PC-3 (cell line): ENCODE measurements at regions of chr2 and their contacts with region 1.

Region 1: GRCh38 chr2:178219247-178219646 is 24.9 kb downstream of the OSBPL6 start:
- DNase-seq: no peak
- ATAC-seq: no peak
- H3K4me3 ChIP-seq: no peak overlapping the region
- H3K27ac ChIP-seq: no peak overlapping the region
- H3K4me1 ChIP-seq: no peaks in the 10 kb centered on the region
- H3K27me3 ChIP-seq: no peaks in the 10 kb centered on the region
- CTCF ChIP-seq: no peak

Region 2: DNA sequence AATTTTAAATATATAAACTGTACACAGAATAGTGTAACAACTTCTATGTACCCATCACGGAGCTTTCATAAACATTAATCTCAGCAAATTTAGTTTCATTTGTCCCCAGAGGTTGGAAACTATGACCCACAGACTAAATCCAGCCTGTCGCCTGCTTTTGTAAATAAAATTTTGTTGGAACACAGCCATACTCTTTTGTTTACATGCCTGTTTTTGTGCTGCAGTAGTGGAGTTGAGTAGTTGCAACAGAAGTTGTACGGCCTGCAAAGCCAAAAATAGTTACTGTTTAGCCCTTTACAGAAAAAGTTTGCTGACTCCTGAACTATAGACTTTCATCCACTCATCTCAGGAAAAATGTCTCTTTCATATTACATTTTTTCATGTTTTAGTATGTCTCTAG is 67.2 kb before region 1 on chr2:
- CTCF ChIA-PET with region 1: no interaction called
- POLR2A ChIA-PET with region 1: no interaction called
- intact Hi-C with region 1: no loop called
- DNase-seq: no peak
- ATAC-seq: no peak
- H3K4me3 ChIP-seq: no peak overlapping the region
- H3K27ac ChIP-seq: no peak overlapping the region
- H3K4me1 ChIP-seq: no peaks in the 10 kb centered on the region
- H3K27me3 ChIP-seq: no peaks in the 10 kb centered on the region
- CTCF ChIP-seq: no peak

Region 3: DNA sequence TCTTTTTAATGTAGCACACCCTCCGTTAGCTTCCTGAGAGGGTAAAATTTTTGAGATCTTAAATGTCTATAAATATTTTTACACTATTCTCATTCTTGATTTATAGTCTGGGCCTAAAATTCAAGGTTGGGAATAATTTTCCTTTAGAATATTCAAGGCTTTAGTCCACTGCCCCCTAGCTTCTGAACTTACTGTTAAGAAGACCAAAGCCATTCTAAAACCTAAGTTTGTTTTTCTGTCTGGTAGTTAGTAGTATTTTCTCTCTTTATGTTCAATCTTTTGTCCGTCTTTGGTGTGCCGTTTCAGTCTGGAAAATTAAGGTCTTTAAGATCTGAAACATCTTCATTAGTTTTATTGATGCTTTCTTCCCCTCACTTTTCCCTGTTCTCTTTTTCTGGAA is 10.4 kb before region 1 on chr2:
- CTCF ChIA-PET with region 1: interaction called, 10 read pairs
- POLR2A ChIA-PET with region 1: no interaction called
- intact Hi-C with region 1: no loop called
- DNase-seq: peak; percentile 43
- ATAC-seq: no peak
- H3K4me3 ChIP-seq: no peak overlapping the region
- H3K27ac ChIP-seq: no peak overlapping the region
- H3K4me1 ChIP-seq: peaks cover 13% of the 10 kb centered on the region
- H3K27me3 ChIP-seq: no peaks in the 10 kb centered on the region
- CTCF ChIP-seq: peak; percentile 68

Region 4: DNA sequence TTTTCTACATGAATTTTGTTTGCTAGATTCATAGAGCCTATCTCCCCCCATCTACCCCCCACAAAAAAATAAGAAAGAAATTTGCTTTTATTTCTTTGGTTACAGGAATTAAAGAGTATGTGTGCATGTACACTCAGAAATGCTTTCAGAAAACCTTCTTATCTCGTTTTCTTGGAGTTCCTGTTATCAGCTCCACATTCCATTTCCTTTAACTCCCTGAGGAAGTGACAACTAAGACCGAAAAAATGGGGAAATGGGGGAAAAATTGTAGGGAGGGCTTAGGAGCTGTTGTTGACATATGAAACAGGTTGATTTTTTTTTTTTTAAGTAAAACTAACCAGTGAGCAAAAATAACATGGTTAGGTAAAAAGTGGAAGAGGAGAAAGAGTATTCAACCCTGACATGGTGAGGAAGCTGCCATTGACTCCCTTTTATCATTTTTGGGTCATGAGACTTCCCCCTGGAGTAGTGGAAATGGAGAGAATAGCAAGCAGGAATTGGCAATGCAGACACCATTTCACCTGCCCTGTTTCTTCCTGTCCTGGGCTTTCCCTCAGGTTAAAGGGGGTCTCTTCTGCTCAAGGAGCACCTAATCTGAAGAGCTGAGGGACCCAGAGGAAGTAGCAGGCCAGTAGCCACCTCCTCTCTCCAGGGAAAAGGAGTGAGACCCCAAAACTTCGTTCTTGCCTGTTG is 68.6 kb after region 1 on chr2:
- CTCF ChIA-PET with region 1: no interaction called
- POLR2A ChIA-PET with region 1: no interaction called
- intact Hi-C with region 1: no loop called
- DNase-seq: no peak
- ATAC-seq: no peak
- H3K4me3 ChIP-seq: no peak overlapping the region
- H3K27ac ChIP-seq: no peak overlapping the region
- H3K4me1 ChIP-seq: no peaks in the 10 kb centered on the region
- H3K27me3 ChIP-seq: no peaks in the 10 kb centered on the region
- CTCF ChIP-seq: no peak

Region 5: DNA sequence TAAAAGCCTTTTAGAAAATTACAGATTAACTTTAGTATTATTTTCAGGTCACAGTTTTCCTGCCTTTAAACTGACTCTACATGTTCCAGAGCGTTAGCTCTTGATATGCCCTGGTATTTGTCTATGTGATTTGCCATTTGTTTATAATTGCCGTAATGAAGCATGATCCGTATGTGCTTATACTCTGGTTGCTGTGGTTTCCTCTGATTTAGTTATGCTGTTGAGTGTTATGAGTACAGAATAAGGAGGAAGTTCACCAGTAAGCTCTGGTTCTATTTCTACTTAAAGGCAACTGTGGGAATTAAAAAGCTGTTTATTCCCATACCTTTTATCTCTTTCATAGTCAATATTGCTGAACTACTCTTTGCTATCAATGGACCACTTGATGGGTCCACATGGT is 98.6 kb after region 1 on chr2:
- CTCF ChIA-PET with region 1: no interaction called
- POLR2A ChIA-PET with region 1: no interaction called
- intact Hi-C with region 1: no loop called
- DNase-seq: no peak
- ATAC-seq: no peak
- H3K4me3 ChIP-seq: no peak overlapping the region
- H3K27ac ChIP-seq: no peak overlapping the region
- H3K4me1 ChIP-seq: no peaks in the 10 kb centered on the region
- H3K27me3 ChIP-seq: no peaks in the 10 kb centered on the region
- CTCF ChIP-seq: no peak

Region 6: DNA sequence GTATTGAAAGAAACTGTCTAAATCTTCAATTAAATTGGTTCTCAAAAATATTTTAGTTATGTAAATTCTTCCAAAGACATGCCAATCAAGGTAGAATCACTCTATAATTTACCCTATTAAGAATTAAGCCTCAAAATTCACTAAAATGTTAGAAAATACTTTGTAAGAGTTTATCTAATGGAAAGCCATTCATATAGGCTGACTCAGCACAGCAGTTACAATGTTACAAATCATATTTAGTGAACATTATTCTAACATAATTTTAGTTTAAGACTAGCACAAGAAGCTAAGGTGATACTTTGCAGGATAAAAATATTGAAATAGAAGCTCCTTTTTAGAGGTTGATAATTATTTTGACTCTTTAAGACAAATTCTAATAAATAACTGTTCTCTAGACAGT is 1505.2 kb after region 1 on chr2:
- CTCF ChIA-PET with region 1: interaction called, 11 read pairs
- POLR2A ChIA-PET with region 1: no interaction called
- intact Hi-C with region 1: no loop called
- DNase-seq: no peak
- ATAC-seq: no peak
- H3K4me3 ChIP-seq: no peak overlapping the region
- H3K27ac ChIP-seq: no peak overlapping the region
- H3K4me1 ChIP-seq: no peaks in the 10 kb centered on the region
- H3K27me3 ChIP-seq: no peaks in the 10 kb centered on the region
- CTCF ChIP-seq: no peak